IMR-90 (cell line): ENCODE measurements at regions of chr7 and their contacts with region 1.

Region 1: GRCh38 chr7:7696458-7697119 is 21.8 kb downstream of the RPA3 start:
- DNase-seq: peak; percentile 51
- ATAC-seq: peak; percentile 53; the same call in 1 of the 2 replicates
- H3K4me3 ChIP-seq: no peak overlapping the region
- H3K27ac ChIP-seq: no peak overlapping the region
- H3K4me1 ChIP-seq: peaks cover 4% of the 10 kb centered on the region; the same call in 1 of the 2 replicates
- H3K27me3 ChIP-seq: no peaks in the 10 kb centered on the region
- CTCF ChIP-seq: no peak
- POLR2A ChIP-seq: no peak
- RAD21 ChIP-seq: no peak

Region 2: DNA sequence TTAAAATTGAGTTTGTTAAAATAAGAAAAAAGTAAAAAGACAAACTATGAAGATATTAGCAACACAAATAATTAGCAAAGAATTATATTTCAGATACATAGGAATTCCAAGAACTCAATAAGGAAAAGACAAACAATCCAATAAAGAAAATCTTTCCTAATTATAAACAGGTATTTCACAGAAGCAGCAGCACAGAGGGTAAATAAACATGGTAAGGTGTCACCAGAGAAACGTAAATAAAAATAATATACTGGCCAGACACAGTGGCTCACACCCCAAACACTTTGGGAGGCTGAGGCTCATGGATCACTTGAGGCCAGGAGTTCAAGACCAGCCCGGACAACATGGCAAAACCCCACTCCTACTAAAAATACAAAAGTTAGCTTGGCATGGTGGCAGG is 341.5 kb before region 1 on chr7:
- CTCF ChIA-PET with region 1: no interaction called
- POLR2A ChIA-PET with region 1: no interaction called
- dilution Hi-C with region 1: no loop called
- in situ Hi-C with region 1: no loop called
- intact Hi-C with region 1: no loop called
- DNase-seq: no peak
- ATAC-seq: no peak
- H3K4me3 ChIP-seq: no peak overlapping the region
- H3K27ac ChIP-seq: no peak overlapping the region
- H3K4me1 ChIP-seq: no peaks in the 10 kb centered on the region
- H3K27me3 ChIP-seq: no peaks in the 10 kb centered on the region
- CTCF ChIP-seq: no peak
- POLR2A ChIP-seq: no peak
- RAD21 ChIP-seq: no peak

Region 3: GRCh38 chr7:7640221-7641128 is 56.1 kb before region 1 on chr7 and contains the start of gene UMAD1:
- CTCF ChIA-PET with region 1: no interaction called
- POLR2A ChIA-PET with region 1: no interaction called
- dilution Hi-C with region 1: no loop called
- in situ Hi-C with region 1: no loop called
- intact Hi-C with region 1: loop called (anchors 5 kb)
- DNase-seq: peak; percentile 98
- ATAC-seq: peak; percentile 97
- H3K4me3 ChIP-seq: peak within 1 kb of the TSS; percentile 78
- H3K27ac ChIP-seq: peak within 1 kb of the TSS; percentile 58
- H3K4me1 ChIP-seq: no peaks in the 10 kb centered on the region
- H3K27me3 ChIP-seq: no peaks in the 10 kb centered on the region
- CTCF ChIP-seq: no peak
- POLR2A ChIP-seq: peak; percentile 79; the same call in 1 of the 2 replicates
- RAD21 ChIP-seq: no peak
- total RNA-seq, gene UMAD1: 5.2 and 9.2 TPM in 2 replicates